ENCODE measurements at regions of chr19 and their contacts with region 1.

Region 1: DNA sequence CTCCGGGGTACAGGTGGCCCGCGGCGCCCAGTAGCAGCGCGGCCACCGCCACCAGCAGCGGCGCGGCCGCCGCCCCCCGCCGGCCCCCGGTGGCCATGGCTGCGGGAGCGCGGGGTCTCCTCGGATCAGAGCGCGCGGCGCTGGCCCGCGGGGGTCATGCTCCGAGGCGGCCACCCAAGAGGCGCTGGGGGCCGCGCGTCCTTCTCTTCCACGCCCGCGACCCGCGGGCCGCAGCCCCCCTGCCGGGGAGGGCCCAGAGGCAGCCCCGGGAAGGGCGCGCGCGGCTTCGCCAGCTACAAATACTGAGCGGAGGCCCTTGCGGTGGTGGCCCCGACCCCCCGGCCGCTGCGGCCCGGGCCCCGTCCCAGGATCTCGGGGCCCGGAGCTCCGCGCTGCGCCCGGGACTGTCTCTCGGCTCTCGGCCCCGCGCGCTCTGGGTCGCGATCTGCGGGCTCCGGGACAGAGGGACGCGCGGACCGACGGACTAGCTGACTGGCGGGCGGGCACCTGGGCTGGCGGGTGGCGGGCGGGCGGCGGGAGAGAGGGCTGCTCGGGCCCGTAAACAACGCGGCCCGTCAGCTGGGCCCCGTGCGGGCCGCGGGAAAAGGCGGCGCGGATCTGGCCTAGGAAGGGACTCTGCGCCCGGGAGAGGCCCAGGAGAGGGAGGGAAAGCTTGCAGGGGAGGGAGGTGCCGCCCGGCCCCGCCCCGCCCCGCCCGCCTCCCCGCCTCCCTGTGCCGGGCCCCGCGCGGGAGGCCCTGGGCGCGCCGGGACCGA is at the start of gene INSR:
- DNase-seq: peak; percentile 91 to 93 (median 92)
- ATAC-seq: peak; percentile 91 to 95 (median 94)
- H3K4me3 ChIP-seq: peak within 1 kb of the TSS; percentile 78 to 100 (median 98)
- H3K27ac ChIP-seq: peak within 1 kb of the TSS; percentile 87 to 99 (median 96)
- H3K4me1 ChIP-seq: peaks cover 0 to 34% (median 18%) of the 10 kb centered on the region in 12 donors
- H3K27me3 ChIP-seq: peaks cover 0 to 2% (median 0%) of the 10 kb centered on the region in 9 donors
- CTCF ChIP-seq: no peak
- POLR2A ChIP-seq: peak; percentile 23 to 63
- total RNA-seq, gene INSR: 73.7 to 221 (median 103) TPM

Region 2: GRCh38 chr19:7104747-7105447 is 189.1 kb before region 1 on chr19:
- intact Hi-C with region 1: loop called in 1 of 10 experiments (anchors 5 kb)
- DNase-seq: no peak
- ATAC-seq: peak in 2 of 4 donors; percentile 16 to 24
- H3K4me3 ChIP-seq: no peak overlapping the region
- H3K27ac ChIP-seq: no peak overlapping the region
- H3K4me1 ChIP-seq: peaks cover 0 to 5% (median 0%) of the 10 kb centered on the region in 12 donors
- H3K27me3 ChIP-seq: peaks cover 0 to 4% (median 0%) of the 10 kb centered on the region in 9 donors
- CTCF ChIP-seq: no peak
- POLR2A ChIP-seq: no peak

Region 3: GRCh38 chr19:7152568-7152967 is 141.4 kb before region 1 on chr19:
- intact Hi-C with region 1: loop called in 6 of 10 experiments (anchors 1 to 10 kb)
- DNase-seq: no peak
- ATAC-seq: peak in 1 of 4 donors; percentile 15
- H3K4me3 ChIP-seq: no peak overlapping the region
- H3K27ac ChIP-seq: no peak overlapping the region
- H3K4me1 ChIP-seq: peaks cover 0 to 8% (median 0%) of the 10 kb centered on the region in 12 donors
- H3K27me3 ChIP-seq: no peaks in the 10 kb centered on the region
- CTCF ChIP-seq: no peak
- POLR2A ChIP-seq: no peak

Region 4: GRCh38 chr19:7211204-7211951 is 82.6 kb before region 1 on chr19:
- intact Hi-C with region 1: loop called in 1 of 10 experiments (anchors 5 kb)
- DNase-seq: peak; percentile 71 to 75 (median 73)
- ATAC-seq: peak; percentile 92 to 94 (median 93)
- H3K4me3 ChIP-seq: no peak overlapping the region
- H3K27ac ChIP-seq: peak overlapping the region in 11 of 12 donors; percentile 3 to 79 (median 59)
- H3K4me1 ChIP-seq: peaks cover 3 to 70% (median 41%) of the 10 kb centered on the region in 12 donors
- H3K27me3 ChIP-seq: no peaks in the 10 kb centered on the region
- CTCF ChIP-seq: no peak
- POLR2A ChIP-seq: no peak

Region 5: DNA sequence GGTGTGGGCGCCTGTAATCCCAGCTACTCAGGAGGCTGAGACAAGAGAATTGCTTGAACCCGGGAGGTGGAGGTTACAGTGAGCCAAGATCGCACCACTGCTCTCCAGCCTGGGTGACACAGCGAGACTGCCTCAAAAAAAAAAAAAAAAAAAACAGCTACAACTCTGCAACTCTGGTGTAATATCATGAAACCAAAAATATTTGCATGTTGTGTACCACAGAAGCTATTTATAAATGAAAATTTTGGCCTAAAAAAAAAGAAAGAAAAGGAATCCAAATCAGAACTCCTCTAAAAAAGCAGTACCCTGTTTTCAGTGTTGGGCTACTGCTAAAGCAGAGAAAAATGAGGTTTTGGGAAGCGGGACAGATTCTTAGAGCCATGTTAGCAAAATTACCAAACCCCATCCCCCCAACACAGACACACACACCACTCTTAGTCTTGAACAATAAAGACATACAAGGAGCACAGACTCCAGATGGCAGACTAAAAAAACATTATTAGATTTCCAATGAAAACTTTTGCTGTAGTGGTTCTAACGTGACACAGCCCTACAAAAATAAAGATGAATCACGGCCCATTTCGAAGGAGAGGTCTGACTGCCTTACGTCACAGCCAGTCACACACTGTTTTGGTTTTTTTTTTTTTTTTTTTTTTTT is 51.3 kb before region 1 on chr19:
- intact Hi-C with region 1: loop called in 1 of 10 experiments (anchors 5 kb)
- DNase-seq: no peak
- ATAC-seq: peak; percentile 50 to 82 (median 76)
- H3K4me3 ChIP-seq: peak overlapping the region in 2 of 12 donors; percentile 3 to 15
- H3K27ac ChIP-seq: peak overlapping the region in 10 of 12 donors; percentile 21 to 77 (median 60)
- H3K4me1 ChIP-seq: peaks cover 3 to 46% (median 18%) of the 10 kb centered on the region in 12 donors
- H3K27me3 ChIP-seq: no peaks in the 10 kb centered on the region
- CTCF ChIP-seq: no peak
- POLR2A ChIP-seq: no peak

Region 6: DNA sequence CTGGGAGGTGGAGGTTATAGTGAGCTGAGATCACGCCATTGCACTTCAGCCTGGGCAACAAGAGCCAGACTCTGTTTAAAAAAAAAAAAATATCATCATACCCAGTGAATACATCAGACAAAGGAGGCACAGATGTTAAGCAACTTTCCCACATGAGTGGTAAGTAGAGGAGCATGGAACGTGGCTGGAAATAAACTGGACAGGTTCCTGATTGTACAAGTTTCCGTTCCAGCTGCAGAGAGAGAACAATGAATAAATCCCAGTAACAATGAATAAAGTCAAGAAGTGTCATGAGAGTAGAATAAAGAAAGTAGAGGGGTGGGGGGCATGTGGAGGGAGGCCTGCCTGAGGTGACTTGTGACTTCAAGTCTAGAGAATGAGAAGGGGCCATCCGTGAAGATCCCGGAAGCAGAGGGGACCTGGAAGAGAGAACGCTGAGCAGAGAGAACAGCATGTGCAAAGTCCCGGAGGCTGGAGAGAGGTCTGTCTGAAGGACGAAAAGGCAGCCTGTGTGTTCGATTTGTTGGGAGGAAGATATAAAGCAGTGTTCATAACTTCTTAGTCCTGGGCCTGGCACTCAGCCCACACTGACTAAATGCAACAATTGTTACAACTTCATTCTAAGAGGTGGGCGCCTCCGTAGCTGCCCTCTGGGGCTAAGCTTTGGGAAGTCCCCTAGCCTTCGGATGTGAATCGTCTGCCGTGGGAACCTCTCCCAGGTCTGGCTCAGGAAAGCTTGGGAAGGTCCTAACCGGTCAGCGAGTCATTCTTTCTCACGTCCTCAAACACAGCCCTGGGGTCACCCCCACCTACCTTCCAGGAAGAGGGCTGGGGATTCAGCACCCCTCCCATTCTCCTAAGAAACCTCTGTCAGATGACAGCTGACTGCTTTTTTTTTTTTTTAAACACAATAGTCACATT is 39.5 kb after region 1 on chr19:
- intact Hi-C with region 1: loop called in 2 of 10 experiments (anchors 5 kb)
- DNase-seq: peak in 4 of 5 donors; percentile 38 to 74 (median 58)
- ATAC-seq: peak; percentile 63 to 94 (median 79)
- H3K4me3 ChIP-seq: no peak overlapping the region
- H3K27ac ChIP-seq: peak overlapping the region in 8 of 12 donors; percentile 44 to 80 (median 56)
- H3K4me1 ChIP-seq: peaks cover 0 to 32% (median 10%) of the 10 kb centered on the region in 12 donors
- H3K27me3 ChIP-seq: no peaks in the 10 kb centered on the region
- CTCF ChIP-seq: no peak
- POLR2A ChIP-seq: no peak